Activated CD4-positive, alpha-beta T cell treated with anti-CD3 and anti-CD28 coated beads for 36 hours (primary cell): ENCODE measurements at regions of chr11 and their contacts with region 1.

Region 1: DNA sequence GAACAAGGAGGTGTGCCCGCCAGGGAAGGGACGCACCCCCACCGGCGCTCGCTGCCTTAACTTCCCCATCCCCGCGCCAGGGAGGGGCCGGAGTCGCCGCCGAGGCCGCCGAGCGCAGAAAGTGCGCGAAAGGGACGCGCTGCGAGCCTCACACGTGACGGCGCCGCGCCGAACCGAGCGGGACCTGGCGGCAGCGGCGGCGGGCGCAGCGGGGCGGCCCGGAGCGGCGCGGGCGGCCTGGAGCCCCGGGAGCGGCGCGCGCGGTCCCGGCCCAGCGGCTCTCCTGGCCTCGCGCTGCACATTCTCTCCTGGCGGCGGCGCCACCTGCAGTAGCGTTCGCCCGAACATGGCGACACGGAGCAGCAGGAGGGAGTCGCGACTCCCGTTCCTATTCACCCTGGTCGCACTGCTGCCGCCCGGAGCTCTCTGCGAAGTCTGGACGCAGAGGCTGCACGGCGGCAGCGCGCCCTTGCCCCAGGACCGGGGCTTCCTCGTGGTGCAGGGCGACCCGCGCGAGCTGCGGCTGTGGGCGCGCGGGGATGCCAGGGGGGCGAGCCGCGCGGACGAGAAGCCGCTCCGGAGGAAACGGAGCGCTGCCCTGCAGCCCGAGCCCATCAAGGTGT is at the start of gene SORL1:
- DNase-seq: peak; percentile 89
- ATAC-seq: peak; percentile 59
- H3K4me3 Mint-ChIP-seq: peak within 1 kb of the TSS; percentile 89
- H3K27ac Mint-ChIP-seq: peak within 1 kb of the TSS; percentile 94
- H3K4me1 Mint-ChIP-seq: peaks cover 84% of the 10 kb centered on the region
- H3K27me3 Mint-ChIP-seq: no peaks in the 10 kb centered on the region
- total RNA-seq, gene SORL1: 53.5 to 68.0 TPM

Region 2: DNA sequence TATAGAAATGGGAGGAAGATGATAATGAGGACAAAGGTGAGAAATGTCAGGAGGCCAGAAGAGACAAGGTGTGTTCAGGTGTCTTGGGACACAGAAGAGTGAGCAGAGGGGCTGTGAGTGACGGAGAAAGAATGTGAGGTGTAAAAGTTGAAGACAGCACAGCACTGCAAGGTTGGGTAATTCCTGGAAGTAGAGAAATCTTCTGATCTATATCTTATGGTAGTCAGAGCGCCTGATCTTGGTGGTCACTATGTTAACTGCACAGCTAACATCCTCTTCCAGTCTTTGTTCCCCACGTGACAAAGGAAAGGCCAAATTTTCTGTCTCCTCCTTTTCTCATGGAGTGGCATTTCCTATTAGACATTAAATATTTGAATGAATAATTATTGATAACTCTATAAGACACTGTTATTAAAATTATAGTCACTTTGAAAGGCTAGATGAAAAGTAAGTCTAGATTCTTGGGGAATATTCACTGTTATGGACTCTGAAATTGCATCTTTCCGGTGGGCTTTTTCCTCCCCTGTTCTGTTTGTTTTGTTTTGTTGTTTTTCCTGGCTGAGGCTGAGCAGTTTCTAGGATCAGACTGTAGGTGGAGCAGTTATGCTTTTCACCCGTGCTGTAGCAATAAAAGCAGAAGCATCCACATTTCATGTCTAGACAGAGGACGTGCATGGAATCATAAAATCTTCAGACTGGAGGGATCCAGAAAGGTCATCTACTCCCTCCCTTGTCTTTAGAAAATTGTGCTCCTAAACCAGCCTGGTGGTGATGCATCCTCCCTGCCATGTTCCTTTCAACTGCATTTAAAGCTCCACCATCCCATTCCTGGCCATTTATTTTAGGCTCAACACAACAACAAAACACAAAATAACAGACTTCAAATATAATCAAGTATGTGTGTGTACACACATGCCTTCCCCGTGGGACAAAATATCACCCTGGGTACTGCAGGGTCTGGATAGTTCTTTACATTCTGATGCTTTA is 133.0 kb before region 1 on chr11:
- CTCF ChIA-PET with region 1: interaction called, 5 read pairs
- POLR2A ChIA-PET with region 1: no interaction called
- intact Hi-C with region 1: loop called (anchors 2 to 10 kb)
- DNase-seq: peak; percentile 27
- ATAC-seq: peak; percentile 63
- H3K4me3 Mint-ChIP-seq: no peak overlapping the region
- H3K27ac Mint-ChIP-seq: no peak overlapping the region
- H3K4me1 Mint-ChIP-seq: peaks cover 18% of the 10 kb centered on the region
- H3K27me3 Mint-ChIP-seq: peaks cover 3% of the 10 kb centered on the region

Region 3: DNA sequence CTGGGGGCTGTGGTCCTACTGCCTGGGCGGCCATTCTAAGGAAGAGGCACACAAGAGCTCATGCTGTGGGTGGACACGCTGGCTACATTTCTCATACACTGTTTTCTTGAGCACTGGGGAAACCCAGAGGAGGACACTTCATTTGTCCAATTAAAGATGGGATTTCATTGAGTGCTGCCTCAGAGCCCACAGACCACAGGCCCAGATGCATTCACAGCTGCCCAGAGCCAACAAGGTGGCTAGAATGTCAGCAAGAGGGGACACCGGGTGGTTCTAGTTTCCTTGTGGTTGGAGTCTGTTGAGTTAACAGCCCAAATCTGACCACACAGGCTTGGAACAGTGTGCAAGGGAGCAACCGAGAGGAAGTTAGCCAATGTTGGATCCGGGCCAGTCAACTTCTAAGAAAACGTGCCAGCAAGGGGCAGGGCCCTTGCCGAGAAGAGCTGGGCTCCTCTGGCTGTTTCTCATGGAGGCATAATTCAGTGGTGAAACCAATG is 35.0 kb before region 1 on chr11:
- CTCF ChIA-PET with region 1: interaction called, 3 read pairs
- POLR2A ChIA-PET with region 1: no interaction called
- intact Hi-C with region 1: loop called in 1 of 2 experiments (anchors 1 kb)
- DNase-seq: peak; percentile 69
- ATAC-seq: peak; percentile 45
- H3K4me3 Mint-ChIP-seq: no peak overlapping the region
- H3K27ac Mint-ChIP-seq: peak overlapping the region; percentile 80
- H3K4me1 Mint-ChIP-seq: peaks cover 69% of the 10 kb centered on the region
- H3K27me3 Mint-ChIP-seq: no peaks in the 10 kb centered on the region

Region 4: DNA sequence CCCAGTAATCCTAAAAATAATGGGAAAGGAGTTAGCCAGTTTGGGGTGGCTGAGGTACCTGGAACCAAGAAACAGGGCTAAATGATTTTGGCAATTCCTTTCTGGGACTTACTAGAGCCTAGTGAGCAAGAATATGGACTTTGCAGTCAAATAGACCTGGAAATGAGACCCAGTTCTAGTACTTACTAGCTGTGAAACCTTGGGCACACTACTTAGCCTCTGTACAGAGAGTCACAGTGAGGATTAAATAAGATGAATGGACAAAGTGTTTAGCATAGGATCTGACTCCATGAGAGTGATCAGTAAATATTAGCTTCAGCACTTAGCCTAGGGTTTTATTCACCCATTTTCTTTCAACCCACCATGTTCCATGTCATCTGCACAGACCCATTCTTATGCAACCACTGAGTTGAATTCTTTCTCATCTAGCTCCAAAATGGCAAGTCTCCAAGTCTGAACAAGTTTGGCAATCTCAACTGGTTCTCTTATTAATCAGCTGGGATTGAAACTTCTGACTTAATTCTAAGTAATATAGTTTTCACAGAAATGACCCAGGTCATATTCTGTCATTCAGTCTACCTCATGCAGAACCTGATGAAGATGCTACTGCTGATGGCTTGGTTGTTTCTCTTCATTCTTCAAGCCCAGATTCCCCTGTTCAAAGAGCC is 14.9 kb before region 1 on chr11:
- CTCF ChIA-PET with region 1: interaction called, 6 read pairs
- POLR2A ChIA-PET with region 1: interaction called, 6 read pairs
- intact Hi-C with region 1: loop called in 1 of 2 experiments (anchors 2 kb)
- DNase-seq: no peak
- ATAC-seq: peak; percentile 81
- H3K4me3 Mint-ChIP-seq: no peak overlapping the region
- H3K27ac Mint-ChIP-seq: peak overlapping the region; percentile 61
- H3K4me1 Mint-ChIP-seq: peaks cover 49% of the 10 kb centered on the region
- H3K27me3 Mint-ChIP-seq: no peaks in the 10 kb centered on the region

Region 5: DNA sequence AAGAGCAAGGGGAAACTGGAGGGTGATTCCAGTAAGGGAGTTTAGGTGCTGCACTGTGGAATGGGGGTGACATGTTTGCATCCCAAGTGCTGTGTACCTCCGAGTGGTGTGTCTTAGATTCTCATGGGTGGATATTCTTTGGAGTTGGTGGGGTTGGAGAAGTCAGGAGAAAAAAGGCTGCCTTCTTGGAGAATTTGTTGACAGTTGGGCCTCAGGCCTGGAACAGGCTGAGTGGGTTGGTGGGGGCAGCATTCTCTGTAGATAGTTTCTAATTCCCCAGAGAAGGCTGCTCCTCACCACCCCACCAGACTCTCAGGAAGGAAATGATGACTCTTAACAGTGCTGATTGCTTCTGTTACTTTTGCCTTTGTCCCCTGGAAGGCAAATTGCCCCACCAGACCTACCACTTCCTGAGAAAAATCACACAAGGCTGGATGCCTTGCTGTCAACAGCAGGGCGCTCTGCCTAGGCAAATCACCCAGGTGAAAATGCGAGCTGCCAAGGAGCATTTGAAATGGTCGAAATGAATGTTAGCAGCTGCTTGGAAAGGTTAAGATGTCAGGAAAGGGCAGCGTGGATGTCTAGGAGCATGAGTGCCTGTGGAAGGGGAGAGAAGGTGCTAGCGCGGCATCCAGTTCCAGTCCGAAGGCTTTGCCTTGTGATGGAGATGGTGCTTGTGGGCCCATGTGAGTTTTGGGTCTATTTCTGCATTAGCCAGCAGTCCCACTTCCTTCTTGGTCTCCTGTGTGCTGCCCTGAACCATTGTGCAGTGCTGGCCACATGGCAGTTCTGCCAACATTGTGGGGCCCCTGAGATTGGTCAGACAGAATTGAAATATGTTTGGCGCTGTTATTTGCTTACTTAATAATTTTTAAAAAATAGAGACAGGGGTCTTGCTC is 30.4 kb after region 1 on chr11:
- CTCF ChIA-PET with region 1: interaction called, 4 read pairs
- POLR2A ChIA-PET with region 1: no interaction called
- intact Hi-C with region 1: loop called (anchors 1 to 2 kb)
- DNase-seq: peak; percentile 65
- ATAC-seq: peak; percentile 82
- H3K4me3 Mint-ChIP-seq: peak overlapping the region; percentile 70
- H3K27ac Mint-ChIP-seq: peak overlapping the region; percentile 96
- H3K4me1 Mint-ChIP-seq: peaks cover 51% of the 10 kb centered on the region
- H3K27me3 Mint-ChIP-seq: no peaks in the 10 kb centered on the region